ENCODE measurements at regions of chr19 and their contacts with region 1.

Region 1: GRCh38 chr19:19224852-19225494 is 13.2 kb downstream of the NCAN start:
- DNase-seq: peak; percentile 72
- H3K4me3 Mint-ChIP-seq: peak overlapping the region; percentile 81
- H3K27ac Mint-ChIP-seq: peak overlapping the region; percentile 31
- H3K4me1 Mint-ChIP-seq: peaks cover 8% of the 10 kb centered on the region
- H3K27me3 Mint-ChIP-seq: peaks cover 15% of the 10 kb centered on the region

Region 2: DNA sequence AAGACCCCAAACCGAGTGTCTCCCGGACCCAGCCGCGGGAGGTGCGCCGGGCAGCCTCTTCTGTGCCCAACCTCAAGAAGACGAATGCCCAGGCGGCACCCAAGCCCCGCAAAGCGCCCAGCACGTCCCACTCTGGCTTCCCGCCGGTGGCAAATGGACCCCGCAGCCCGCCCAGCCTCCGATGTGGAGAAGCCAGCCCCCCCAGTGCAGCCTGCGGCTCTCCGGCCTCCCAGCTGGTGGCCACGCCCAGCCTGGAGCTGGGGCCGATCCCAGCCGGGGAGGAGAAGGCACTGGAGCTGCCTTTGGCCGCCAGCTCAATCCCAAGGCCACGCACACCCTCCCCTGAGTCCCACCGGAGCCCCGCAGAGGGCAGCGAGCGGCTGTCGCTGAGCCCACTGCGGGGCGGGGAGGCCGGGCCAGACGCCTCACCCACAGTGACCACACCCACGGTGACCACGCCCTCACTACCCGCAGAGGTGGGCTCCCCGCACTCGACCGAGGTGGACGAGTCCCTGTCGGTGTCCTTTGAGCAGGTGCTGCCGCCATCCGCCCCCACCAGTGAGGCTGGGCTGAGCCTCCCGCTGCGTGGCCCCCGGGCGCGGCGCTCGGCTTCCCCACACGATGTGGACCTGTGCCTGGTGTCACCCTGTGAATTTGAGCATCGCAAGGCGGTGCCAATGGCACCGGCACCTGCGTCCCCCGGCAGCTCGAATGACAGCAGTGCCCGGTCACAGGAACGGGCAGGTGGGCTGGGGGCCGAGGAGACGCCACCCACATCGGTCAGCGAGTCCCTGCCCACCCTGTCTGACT is 1497.8 kb before region 1 on chr19:
- intact Hi-C with region 1: no loop called
- DNase-seq: no peak
- H3K4me3 Mint-ChIP-seq: no peak overlapping the region
- H3K27ac Mint-ChIP-seq: no peak overlapping the region
- H3K4me1 Mint-ChIP-seq: peaks cover 9% of the 10 kb centered on the region
- H3K27me3 Mint-ChIP-seq: no peaks in the 10 kb centered on the region

Region 3: GRCh38 chr19:18660052-18660910 is 564.7 kb before region 1 on chr19:
- intact Hi-C with region 1: no loop called
- DNase-seq: no peak
- H3K4me3 Mint-ChIP-seq: no peak overlapping the region
- H3K27ac Mint-ChIP-seq: no peak overlapping the region
- H3K4me1 Mint-ChIP-seq: peaks cover 7% of the 10 kb centered on the region
- H3K27me3 Mint-ChIP-seq: no peaks in the 10 kb centered on the region

Region 4: DNA sequence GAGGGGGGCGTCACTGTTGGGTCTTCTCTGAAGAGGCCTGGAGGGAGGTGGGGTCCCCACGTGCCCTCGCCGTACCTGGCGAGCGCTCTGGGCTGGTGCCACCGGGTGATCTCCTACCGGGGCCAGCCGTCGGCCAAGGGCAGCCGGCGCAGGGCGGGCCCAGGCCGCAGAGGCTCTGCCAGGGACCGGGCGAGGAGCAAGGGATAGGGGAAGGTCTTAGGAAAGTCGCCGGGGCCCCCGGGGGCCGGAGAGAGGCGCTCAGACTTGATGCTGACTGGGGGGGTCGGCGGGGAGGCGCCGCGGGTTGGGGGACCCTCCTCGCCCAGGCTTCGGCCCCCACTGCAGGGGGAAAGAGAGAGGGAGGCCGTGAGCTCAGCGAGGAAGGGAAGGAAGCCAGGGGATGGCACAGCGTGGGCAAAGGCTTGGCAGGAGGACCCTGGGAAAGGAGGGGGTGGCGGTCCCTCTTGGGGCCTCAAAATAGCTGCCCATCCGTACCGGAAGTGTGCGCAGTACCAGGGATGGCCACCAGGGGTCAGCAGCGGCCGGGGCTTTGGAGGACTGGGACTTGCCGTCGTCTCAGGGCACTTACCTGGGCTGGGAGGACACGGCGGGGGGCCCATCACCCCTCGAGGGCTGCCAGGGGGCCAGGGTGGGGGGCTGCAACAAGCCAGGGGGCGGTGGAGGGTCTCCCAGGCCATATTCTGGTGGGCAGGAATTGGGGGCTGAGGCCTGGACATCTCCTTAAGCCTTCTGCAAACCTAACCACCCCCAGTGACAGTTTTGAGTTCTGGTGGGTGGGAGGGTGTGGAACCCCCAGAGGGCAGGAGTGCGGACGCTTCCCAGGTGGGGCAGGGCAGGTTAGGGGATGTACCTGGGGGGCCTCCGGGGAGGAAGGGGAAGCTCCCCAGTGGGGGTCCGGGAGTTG is 79.0 kb before region 1 on chr19:
- intact Hi-C with region 1: loop called (anchors 1 kb)
- DNase-seq: peak; percentile 80
- H3K4me3 Mint-ChIP-seq: no peak overlapping the region
- H3K27ac Mint-ChIP-seq: no peak overlapping the region
- H3K4me1 Mint-ChIP-seq: no peaks in the 10 kb centered on the region
- H3K27me3 Mint-ChIP-seq: no peaks in the 10 kb centered on the region

Region 5: DNA sequence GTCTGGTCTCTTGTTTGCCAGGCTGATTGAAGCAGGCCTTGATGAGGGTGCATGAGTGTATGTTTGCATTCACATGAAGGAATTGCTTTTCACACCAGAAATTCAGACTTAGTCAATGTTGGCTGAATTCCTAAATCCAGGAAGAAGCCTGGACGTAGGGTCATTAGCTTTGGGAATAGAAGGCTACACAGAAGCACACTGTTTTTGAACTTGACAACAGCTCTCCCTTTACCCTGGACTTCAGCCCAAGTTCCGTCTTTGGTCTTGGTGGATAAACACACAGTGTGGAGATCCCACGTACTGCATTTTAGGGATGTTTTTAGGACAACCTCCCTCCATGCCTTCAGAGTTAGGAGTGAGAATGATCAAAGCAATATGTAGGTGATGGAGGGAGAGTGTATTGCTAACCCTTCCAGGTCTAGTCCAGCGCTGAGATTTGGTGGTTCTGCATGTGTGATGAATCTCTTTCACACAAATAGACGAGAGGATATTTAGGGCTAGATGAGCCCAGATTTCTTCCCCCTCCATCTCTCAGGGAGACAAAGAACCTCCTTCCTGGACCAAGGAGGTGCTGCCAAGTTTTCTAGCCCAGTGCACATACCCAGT is 25.3 kb after region 1 on chr19:
- intact Hi-C with region 1: no loop called
- DNase-seq: no peak
- H3K4me3 Mint-ChIP-seq: no peak overlapping the region
- H3K27ac Mint-ChIP-seq: no peak overlapping the region
- H3K4me1 Mint-ChIP-seq: no peaks in the 10 kb centered on the region
- H3K27me3 Mint-ChIP-seq: peaks cover 13% of the 10 kb centered on the region